Activated CD4-positive, alpha-beta memory T cell treated with anti-CD3 and anti-CD28 coated beads for 36 hours (primary cell): ENCODE measurements at regions of chr18 and their contacts with region 1.

Region 1: DNA sequence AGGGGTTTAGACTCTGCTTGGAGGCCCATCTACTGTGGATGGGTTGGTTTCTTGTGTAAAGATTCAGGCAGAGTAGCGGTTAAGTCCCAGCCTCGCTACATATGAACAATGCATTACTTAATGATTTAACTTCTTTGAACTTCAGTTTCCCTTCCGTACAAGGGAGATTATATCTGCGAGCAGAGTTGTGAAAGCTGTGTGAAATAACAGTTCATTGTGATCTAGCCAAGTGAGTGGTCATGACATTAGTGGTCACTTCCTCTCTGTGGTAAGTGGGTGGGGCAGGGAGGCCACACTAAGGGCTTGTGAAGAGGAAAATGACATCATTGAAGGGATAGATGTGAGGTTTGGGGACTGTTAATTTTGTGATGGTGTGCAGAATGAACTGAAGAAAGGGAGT is 14.1 kb upstream of the MEX3C start:
- DNase-seq: peak; percentile 84
- H3K4me3 Mint-ChIP-seq: no peak overlapping the region
- H3K27ac Mint-ChIP-seq: peak overlapping the region; percentile 35
- H3K4me1 Mint-ChIP-seq: peaks cover 14% of the 10 kb centered on the region
- H3K27me3 Mint-ChIP-seq: no peaks in the 10 kb centered on the region

Region 2: GRCh38 chr18:50334546-50335152 is 876.9 kb before region 1 on chr18:
- CTCF ChIA-PET with region 1: no interaction called
- POLR2A ChIA-PET with region 1: no interaction called
- intact Hi-C with region 1: no loop called
- DNase-seq: no peak
- H3K4me3 Mint-ChIP-seq: no peak overlapping the region
- H3K27ac Mint-ChIP-seq: no peak overlapping the region
- H3K4me1 Mint-ChIP-seq: no peaks in the 10 kb centered on the region
- H3K27me3 Mint-ChIP-seq: peaks cover 10% of the 10 kb centered on the region

Region 3: GRCh38 chr18:51235011-51235789 is 23.6 kb after region 1 on chr18:
- CTCF ChIA-PET with region 1: interaction called, 4 read pairs
- POLR2A ChIA-PET with region 1: no interaction called
- intact Hi-C with region 1: loop called (anchors 1 kb)
- DNase-seq: peak; percentile 69
- H3K4me3 Mint-ChIP-seq: no peak overlapping the region
- H3K27ac Mint-ChIP-seq: peak overlapping the region; percentile 47
- H3K4me1 Mint-ChIP-seq: peaks cover 22% of the 10 kb centered on the region
- H3K27me3 Mint-ChIP-seq: peaks cover 8% of the 10 kb centered on the region

Region 4: GRCh38 chr18:51789871-51790270 is 578.3 kb after region 1 on chr18:
- CTCF ChIA-PET with region 1: no interaction called
- POLR2A ChIA-PET with region 1: no interaction called
- intact Hi-C with region 1: no loop called
- DNase-seq: no peak
- H3K4me3 Mint-ChIP-seq: no peak overlapping the region
- H3K27ac Mint-ChIP-seq: no peak overlapping the region
- H3K4me1 Mint-ChIP-seq: no peaks in the 10 kb centered on the region
- H3K27me3 Mint-ChIP-seq: no peaks in the 10 kb centered on the region